Lower leg skin (tissue), 4 donors: ENCODE measurements at regions of chr18 and their contacts with region 1.

Region 1: DNA sequence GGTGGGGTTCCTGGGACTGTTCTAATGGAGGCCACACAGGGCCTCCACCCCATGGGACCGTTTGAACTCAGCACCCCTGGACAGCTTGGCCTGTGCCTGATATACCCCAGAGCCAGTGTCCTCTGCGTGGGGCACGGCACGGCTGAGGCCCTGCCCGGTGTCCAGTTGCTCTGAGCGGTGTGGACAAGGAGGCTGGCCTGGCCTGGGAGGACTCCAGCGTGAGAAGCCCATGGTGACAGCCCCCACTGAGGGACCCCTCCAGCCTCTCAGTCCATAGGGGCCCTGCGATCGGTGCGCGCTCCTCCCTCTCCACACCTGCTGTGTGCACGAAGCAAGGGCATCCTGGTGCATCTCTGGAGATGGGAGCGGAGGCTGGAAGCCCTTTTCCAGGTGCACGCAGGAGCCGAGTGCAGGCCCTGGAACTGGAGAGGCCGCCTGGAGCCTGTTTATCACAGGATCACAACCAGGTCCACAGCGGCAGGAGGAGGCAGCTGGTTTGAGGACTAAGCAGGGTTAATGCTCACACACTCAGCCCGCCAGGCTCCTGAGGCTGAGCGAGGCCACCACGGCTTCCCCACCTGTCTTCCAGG is 120.2 kb downstream of the PTGR3 start:
- DNase-seq: peak in 1 of 2 donors; percentile 76
- H3K4me3 ChIP-seq: no peak overlapping the region
- CTCF ChIP-seq: no peak
- POLR2A ChIP-seq: no peak

Region 2: GRCh38 chr18:75240433-75240832 is 151.7 kb after region 1 on chr18:
- intact Hi-C with region 1: no loop called
- DNase-seq: no peak
- H3K4me3 ChIP-seq: no peak overlapping the region
- CTCF ChIP-seq: no peak
- POLR2A ChIP-seq: no peak

Region 3: GRCh38 chr18:75350512-75350839 is 261.8 kb after region 1 on chr18:
- intact Hi-C with region 1: no loop called
- DNase-seq: no peak
- H3K4me3 ChIP-seq: no peak overlapping the region
- CTCF ChIP-seq: no peak
- POLR2A ChIP-seq: no peak

Region 4: DNA sequence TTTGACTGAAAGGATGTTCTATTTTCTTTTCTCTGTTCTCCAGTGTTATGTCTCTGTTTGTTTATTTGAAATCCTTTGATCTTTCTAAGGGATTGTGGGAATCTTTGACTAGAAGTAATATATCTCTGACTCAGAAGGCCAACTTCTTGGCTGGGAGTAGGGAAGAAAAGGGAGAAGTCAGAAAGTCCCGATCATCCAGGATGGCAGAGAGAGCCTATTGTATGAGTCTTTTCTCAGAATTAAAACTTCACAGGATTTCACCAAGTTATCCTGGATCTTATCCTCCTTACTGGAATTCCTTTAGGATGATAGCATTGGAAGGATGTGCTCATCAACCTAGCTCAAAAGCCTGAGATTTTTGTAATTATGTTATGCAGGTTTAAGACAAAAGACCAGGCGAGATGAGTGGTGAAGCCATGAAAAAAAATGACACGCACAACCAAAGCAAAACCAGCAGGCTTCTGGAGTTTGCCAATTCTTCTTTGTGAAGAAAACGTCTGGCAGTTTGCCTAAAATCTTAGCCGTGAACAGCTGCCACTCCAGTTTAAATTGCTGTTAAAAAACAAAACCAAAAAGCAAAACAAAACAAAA is 722.3 kb after region 1 on chr18:
- intact Hi-C with region 1: loop called (anchors 10 kb)
- DNase-seq: no peak
- H3K4me3 ChIP-seq: no peak overlapping the region
- CTCF ChIP-seq: no peak
- POLR2A ChIP-seq: no peak